ENCODE measurements at regions of chr2 and their contacts with region 1.

Region 1: DNA sequence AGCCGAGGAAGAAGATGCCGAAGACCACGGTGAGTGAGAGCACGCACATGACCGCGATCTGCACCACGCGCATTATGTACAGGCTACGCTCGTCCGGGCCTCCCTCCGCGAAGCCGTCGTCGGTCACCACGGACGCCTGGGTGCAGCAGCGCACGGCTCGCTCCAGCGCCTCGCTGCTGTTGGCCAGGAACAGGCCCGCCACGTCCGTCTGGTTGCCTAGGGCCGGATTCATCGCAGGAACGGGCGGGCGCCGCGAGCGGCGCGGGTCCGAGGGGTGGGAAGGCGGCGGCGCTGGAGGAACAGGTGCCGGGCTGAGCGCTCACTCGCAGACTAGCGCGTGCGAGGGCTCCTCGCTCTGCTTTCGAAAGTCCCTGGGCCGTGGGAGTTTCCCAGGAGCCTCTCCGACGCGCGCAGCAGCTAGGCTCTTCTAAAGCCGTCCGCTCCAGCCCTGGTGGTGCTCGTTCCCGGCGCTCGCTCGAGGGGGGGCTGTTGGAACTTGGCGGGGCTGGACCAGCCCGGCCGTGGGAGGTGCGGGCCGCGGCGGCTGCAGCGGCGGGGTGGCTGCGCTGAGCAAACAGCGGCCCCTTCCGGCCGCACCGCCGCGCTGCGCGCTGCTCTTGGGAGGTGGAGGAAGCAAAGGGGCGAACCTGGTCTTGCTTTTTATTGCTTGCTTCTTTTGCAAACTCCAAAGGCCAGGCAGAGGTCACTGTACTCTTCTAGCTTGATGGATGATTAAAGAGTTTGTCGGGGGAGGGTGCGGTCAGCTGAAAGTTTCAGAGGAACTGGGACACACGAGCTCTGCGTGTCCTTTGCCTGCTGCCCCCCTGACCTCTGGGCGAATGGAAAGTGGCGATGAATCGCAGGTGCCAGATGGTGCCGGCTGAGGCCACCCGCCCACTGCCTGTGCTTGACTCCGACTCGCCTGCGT is at the start of gene RPRM:
- DNase-seq: peak; percentile 91
- ATAC-seq: peak; percentile 77
- H3K4me3 Mint-ChIP-seq: peak within 1 kb of the TSS; percentile 79
- H3K27ac Mint-ChIP-seq: peak within 1 kb of the TSS; percentile 91
- H3K4me1 Mint-ChIP-seq: peaks cover 50% of the 10 kb centered on the region
- H3K27me3 Mint-ChIP-seq: no peaks in the 10 kb centered on the region
- CTCF ChIP-seq: peak; percentile 91
- total RNA-seq, gene RPRM: 25.4 to 29.0 TPM (median 28.1 TPM) in 3 replicates

Region 2: DNA sequence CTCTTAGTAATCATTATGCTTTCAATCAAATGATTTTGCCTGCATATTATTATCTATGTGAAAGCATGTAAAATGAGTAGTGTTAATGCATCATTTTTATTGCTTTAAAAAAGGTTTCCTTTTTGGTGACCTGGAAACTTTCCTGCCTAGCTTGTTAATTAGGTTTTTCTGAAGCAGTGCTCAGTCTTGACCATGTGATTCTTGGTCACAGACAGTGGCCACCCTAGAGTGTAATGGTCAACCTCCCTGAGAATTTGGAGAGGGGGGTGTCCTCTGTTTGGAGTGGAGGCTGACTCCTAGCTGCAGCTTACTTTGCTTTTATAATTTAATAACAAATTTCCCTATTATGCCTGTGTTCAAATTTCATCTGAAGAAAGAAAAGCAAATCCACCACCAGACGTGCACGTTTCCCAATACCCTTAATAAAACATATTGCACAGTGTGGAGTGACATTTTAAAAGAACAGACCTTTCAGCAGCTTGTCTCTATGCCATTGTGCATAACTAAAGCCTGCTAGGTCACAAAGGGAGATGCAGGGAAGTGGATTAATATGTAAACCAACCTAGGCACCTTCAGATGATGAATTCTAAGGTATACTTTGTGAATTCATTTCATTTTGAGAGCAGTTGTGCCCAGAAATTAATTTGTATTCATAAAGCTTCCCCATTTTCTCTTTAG is 130.6 kb before region 1 on chr2:
- CTCF ChIA-PET with region 1: interaction called, 14 read pairs
- POLR2A ChIA-PET with region 1: no interaction called
- DNase-seq: no peak
- ATAC-seq: no peak
- H3K4me3 Mint-ChIP-seq: no peak overlapping the region
- H3K27ac Mint-ChIP-seq: no peak overlapping the region
- H3K4me1 Mint-ChIP-seq: peaks cover 32% of the 10 kb centered on the region
- H3K27me3 Mint-ChIP-seq: no peaks in the 10 kb centered on the region
- CTCF ChIP-seq: no peak

Region 3: DNA sequence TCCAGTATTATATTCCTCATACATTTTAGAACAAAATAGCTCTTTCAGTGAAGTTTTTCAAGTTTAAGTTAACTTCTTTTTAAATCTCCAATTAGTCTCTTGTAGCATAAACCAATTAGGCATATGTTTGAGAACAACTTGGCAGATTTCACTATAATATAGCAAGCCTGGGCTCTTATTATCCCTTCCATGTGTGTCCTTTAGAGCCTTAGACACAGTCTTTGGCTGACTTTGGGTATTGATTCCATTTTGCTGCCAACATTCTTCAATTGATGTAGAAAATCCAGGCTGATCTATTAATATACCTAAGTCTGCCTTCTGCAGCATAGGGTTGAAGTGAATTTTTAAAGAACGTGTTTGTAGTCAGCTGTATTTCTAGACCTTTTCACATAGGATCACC is 179.1 kb after region 1 on chr2:
- CTCF ChIA-PET with region 1: no interaction called
- POLR2A ChIA-PET with region 1: no interaction called
- DNase-seq: no peak
- ATAC-seq: no peak
- H3K4me3 Mint-ChIP-seq: no peak overlapping the region
- H3K27ac Mint-ChIP-seq: no peak overlapping the region
- H3K4me1 Mint-ChIP-seq: no peaks in the 10 kb centered on the region
- H3K27me3 Mint-ChIP-seq: no peaks in the 10 kb centered on the region
- CTCF ChIP-seq: no peak